ENCODE measurements at regions of chr11 and their contacts with region 1.

Region 1: GRCh38 chr11:67167086-67167485 is 48.0 kb downstream of the KDM2A start:
- DNase-seq: no peak
- ATAC-seq: no peak
- H3K4me3 ChIP-seq: no peak overlapping the region
- H3K27ac ChIP-seq: peak overlapping the region; percentile 72
- H3K4me1 ChIP-seq: peaks cover 42% of the 10 kb centered on the region
- H3K27me3 ChIP-seq: no peaks in the 10 kb centered on the region
- CTCF ChIP-seq: no peak

Region 2: DNA sequence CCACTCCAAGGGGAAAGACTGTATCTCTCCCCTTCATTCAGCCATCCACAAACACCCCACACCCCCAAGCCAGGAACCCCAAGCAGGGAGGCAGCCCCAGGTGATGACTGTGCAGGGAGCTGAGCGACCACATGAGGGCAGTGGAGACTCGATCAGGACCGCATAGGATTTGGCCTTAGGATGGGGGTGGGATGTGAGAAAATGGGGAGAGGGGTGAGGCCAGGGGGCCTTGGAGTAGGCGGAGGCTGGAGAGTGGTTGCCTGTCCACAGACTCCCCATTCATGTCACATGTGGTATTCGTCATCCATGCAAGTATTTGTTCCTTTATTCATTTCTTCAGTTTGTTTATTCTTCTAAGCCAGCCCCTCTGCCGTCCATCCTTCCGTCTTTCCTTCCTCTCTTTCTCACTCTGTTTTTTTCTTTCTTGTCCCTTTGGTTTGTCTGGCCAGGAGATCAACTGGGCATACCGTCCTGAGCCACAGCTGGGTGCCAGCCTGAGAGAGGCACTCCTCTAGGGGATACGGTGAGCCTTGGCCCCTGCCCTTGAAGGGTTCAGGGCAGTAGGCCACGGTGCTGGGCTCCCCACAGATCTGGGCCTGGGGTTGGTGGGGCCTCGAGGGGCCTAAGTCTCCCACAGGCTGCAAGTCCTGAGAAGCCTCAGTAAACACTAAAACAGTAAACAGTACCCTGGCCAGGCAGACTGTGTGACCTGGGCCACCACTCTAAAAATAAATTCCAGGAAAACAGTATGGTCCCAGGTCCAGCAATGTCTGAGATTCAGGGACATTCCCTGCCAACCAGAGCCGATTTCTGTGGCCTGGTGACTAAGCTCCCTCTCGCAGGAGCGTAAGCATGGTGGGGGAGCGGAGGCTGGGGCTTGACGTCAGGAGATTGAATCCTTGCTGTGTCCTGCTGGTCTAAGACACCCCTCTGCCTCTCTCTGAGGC is 112.9 kb before region 1 on chr11:
- intact Hi-C with region 1: loop called in 1 of 2 experiments (anchors 5 kb)
- DNase-seq: peak; percentile 49 to 66
- ATAC-seq: peak; percentile 55 to 74 (median 60)
- H3K4me3 ChIP-seq: no peak overlapping the region
- H3K27ac ChIP-seq: peak overlapping the region; percentile 87
- H3K4me1 ChIP-seq: peaks cover 27% of the 10 kb centered on the region
- H3K27me3 ChIP-seq: no peaks in the 10 kb centered on the region
- CTCF ChIP-seq: peak; percentile 61

Region 3: DNA sequence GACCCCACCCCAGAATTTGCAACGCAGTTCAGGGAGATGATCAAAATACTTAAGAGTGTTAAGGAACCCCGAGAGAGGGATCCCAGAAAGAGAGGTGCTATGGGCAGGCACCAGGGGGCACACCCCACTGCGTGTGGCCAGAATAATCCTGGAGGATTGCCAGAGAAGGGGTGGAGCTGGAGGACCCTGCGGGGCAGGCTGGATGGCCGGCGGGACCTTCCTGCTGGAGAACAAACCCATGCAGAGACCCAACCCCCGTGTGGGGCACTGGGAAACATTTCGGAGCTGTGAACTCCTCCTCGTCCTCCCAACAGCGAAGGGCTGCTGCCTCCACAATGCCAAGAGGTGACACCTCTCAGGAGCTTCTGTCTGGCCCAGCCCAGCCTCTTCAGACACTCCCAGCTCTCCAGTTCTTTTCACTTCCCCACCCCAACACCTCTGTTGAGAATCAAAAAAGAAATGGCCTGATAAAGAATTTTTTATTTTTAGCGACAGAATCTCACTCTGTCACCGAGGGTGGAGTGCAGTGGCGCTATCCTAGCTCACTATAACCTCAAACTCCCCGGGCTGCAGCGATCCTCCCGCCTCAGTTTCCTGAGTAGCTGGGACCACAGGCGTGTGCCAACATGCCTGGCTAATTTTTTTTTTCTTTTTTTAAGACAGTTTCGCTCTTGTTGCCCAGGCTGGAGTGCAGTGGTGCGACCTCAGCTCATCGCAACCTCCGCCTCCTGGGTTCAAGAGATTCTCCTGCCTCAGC is 84.9 kb before region 1 on chr11:
- intact Hi-C with region 1: loop called (anchors 5 to 10 kb)
- DNase-seq: no peak
- ATAC-seq: peak in 3 of 4 donors; percentile 21 to 47 (median 46)
- H3K4me3 ChIP-seq: no peak overlapping the region
- H3K27ac ChIP-seq: no peak overlapping the region
- H3K4me1 ChIP-seq: peaks cover 9% of the 10 kb centered on the region
- H3K27me3 ChIP-seq: no peaks in the 10 kb centered on the region
- CTCF ChIP-seq: no peak

Region 4: GRCh38 chr11:67195971-67196456 is 28.9 kb after region 1 on chr11:
- intact Hi-C with region 1: no loop called
- DNase-seq: no peak
- ATAC-seq: peak in 1 of 4 donors; percentile 32
- H3K4me3 ChIP-seq: no peak overlapping the region
- H3K27ac ChIP-seq: no peak overlapping the region
- H3K4me1 ChIP-seq: no peaks in the 10 kb centered on the region
- H3K27me3 ChIP-seq: no peaks in the 10 kb centered on the region
- CTCF ChIP-seq: no peak

Measured in psoas muscle (tissue), 8 donors.